Endothelial cell of umbilical vein (primary cell): ENCODE measurements at regions of chr11 and their contacts with region 1.

Region 1: DNA sequence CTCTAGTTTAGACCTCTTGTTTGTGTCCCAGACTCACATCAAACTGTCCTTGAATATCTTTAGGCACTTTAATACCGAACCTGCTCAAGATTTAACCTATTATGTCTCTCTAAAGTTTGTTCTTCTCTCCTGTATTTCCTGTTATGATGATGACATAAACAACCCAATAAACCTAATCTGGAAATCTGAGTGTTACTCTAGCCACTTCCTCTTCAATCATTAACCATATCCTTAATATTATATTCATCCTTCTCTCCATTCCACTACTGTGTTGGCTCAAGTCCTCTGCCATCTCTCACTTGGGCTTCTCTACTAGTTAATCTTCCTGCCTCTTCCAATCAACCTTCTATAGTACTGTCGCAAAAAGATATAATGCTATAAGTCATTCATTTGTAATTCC is 36.0 kb downstream of the COPB1 start:
- DNase-seq: no peak
- H3K4me3 ChIP-seq: no peak overlapping the region
- H3K27ac ChIP-seq: no peak overlapping the region
- H3K4me1 ChIP-seq: peaks cover 3% of the 10 kb centered on the region
- H3K27me3 ChIP-seq: no peaks in the 10 kb centered on the region
- CTCF ChIP-seq: no peak
- POLR2A ChIP-seq: no peak

Region 2: DNA sequence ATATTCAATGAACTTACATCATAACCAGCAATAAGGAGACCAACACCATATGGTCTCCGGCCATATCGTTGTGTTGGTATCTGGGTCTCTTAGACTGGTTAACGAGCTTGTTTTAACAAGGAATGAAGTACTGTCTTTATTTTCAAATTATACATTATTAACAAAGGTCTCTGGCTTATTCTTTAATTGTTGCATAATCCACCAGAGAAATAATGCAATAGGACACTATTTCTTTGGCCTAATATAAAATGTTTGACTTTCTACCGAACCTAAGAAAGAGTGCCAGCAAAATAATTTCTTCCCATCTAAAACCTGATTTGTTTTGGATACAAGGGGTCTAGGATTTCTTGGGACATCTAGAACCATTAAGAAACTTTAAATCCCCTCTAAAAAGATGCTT is 50.2 kb after region 1 on chr11:
- CTCF ChIA-PET with region 1: no interaction called
- POLR2A ChIA-PET with region 1: interaction called, 8 read pairs
- dilution Hi-C with region 1: no loop called
- intact Hi-C with region 1: loop called (anchors 5 kb)
- DNase-seq: no peak
- H3K4me3 ChIP-seq: no peak overlapping the region
- H3K27ac ChIP-seq: no peak overlapping the region
- H3K4me1 ChIP-seq: peaks cover 4% of the 10 kb centered on the region
- H3K27me3 ChIP-seq: no peaks in the 10 kb centered on the region
- CTCF ChIP-seq: no peak
- POLR2A ChIP-seq: no peak